GM12878 (cell line): ENCODE measurements at regions of chr4 and their contacts with region 1.

Region 1: GRCh38 chr4:77052352-77052751 is 23.4 kb downstream of the CCNI start:
- DNase-seq: no peak
- ATAC-seq: peak; percentile 87
- H3K4me3 ChIP-seq: no peak overlapping the region
- H3K27ac ChIP-seq: no peak overlapping the region
- H3K4me1 ChIP-seq: no peaks in the 10 kb centered on the region
- H3K27me3 ChIP-seq: no peaks in the 10 kb centered on the region
- CTCF ChIP-seq: peak; percentile 73 to 77 (median 73)
- EP300 ChIP-seq: no peak
- POLR2A ChIP-seq: no peak
- RAD21 ChIP-seq: peak; percentile 72

Region 2: GRCh38 chr4:77065382-77065781 is 13.0 kb after region 1 on chr4:
- CTCF ChIA-PET with region 1: interaction called, 26 read pairs
- POLR2A ChIA-PET with region 1: no interaction called
- RAD21 ChIA-PET with region 1: interaction called, 6 read pairs
- SMC1A ChIA-PET with region 1: interaction called, 8 read pairs
- in situ Hi-C with region 1: no loop called
- intact Hi-C with region 1: no loop called
- DNase-seq: no peak
- ATAC-seq: no peak
- H3K4me3 ChIP-seq: no peak overlapping the region
- H3K27ac ChIP-seq: no peak overlapping the region
- H3K4me1 ChIP-seq: no peaks in the 10 kb centered on the region; the same call in 1 of the 2 replicates
- H3K27me3 ChIP-seq: no peaks in the 10 kb centered on the region
- CTCF ChIP-seq: no peak
- EP300 ChIP-seq: no peak
- POLR2A ChIP-seq: no peak
- RAD21 ChIP-seq: no peak

Region 3: DNA sequence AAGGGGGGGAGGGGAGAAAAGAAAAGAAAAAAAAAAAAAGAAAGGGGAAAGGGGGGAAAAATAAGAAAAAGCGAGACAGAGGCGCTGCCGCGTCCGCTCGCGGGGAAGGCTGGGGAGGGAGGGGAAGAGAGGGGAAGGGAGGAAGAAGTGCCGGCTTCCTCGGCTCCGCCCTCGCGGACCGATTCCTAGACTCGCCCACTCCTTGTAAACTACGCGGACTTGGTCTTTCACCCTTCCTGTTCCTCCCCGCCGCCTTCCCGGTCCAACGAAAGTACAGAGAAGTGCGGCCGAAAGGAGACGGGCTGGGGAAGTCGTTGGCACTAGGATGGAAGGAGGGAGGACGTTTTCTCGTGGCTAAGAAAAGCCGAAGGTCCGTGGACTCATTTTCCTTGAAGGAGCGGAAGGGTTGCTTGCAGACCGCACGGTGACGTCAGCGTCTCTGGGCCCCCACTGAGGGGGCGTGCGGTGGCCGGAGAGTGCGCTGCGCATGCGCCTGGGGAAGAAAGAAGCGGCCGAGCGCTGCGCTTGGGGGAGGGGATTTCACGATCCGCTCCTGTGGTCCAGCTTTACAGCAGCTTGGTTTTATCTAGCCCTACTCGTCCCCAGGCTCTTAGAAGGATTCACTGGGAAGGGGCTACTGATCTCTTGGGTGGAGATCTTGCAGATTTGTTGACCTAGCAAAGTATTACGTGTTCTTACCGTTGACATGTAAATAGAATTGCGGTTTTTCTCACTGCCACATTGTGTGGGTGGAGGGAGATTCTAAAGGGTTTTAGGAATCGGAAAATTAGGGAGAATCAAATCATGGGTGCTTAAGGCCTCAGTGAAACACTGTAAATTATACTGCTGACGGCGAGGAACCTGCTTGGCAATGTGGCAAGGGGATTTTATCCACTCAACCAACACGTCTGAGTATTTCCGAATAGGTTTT is 23.8 kb after region 1 on chr4 and contains the start of gene CCNI:
- CTCF ChIA-PET with region 1: interaction called, 26 read pairs
- POLR2A ChIA-PET with region 1: interaction called, 3 read pairs
- RAD21 ChIA-PET with region 1: interaction called, 7 read pairs
- SMC1A ChIA-PET with region 1: interaction called, 13 read pairs
- in situ Hi-C with region 1: no loop called
- intact Hi-C with region 1: no loop called
- DNase-seq: peak; percentile 92
- ATAC-seq: peak; percentile 77
- H3K4me3 ChIP-seq: peak within 1 kb of the TSS; percentile 97
- H3K27ac ChIP-seq: peak within 1 kb of the TSS; percentile 100
- H3K4me1 ChIP-seq: 0 out of 2 replicates have a peak, but pooled peaks cover 3% of the 10 kb centered on the region
- H3K27me3 ChIP-seq: no peaks in the 10 kb centered on the region
- CTCF ChIP-seq: no peak
- EP300 ChIP-seq: peak; percentile 4 to 78; a peak in 3 of 4 replicates
- POLR2A ChIP-seq: peak; percentile 82
- RAD21 ChIP-seq: no peak
- polyA plus RNA-seq, gene CCNI: 72.4 to 82.4 TPM

Region 4: DNA sequence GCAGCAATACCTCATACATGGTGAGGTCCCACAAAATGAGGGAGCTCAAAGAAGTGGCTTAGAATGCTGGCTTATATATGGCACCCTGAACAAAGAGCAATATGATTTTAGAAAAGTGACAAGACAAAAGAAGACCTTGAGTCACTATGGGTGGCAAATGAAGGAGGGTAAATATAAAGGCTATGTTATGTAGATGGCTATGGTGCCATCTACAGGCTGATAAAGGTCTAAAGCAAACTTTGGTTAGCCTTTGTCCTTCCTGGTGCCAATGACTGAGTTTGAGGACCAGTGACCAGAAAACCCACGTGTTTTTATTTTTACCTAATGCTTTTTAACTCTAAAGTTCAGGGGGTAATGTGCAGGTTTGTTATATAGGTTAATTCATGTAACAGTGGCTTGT is 256.5 kb after region 1 on chr4:
- CTCF ChIA-PET with region 1: no interaction called
- POLR2A ChIA-PET with region 1: no interaction called
- RAD21 ChIA-PET with region 1: no interaction called
- SMC1A ChIA-PET with region 1: interaction called, 4 read pairs
- in situ Hi-C with region 1: no loop called
- intact Hi-C with region 1: loop called (anchors 10 kb)
- DNase-seq: no peak
- ATAC-seq: peak; percentile 82
- H3K4me3 ChIP-seq: no peak overlapping the region
- H3K27ac ChIP-seq: no peak overlapping the region
- H3K4me1 ChIP-seq: no peaks in the 10 kb centered on the region
- H3K27me3 ChIP-seq: no peaks in the 10 kb centered on the region
- CTCF ChIP-seq: peak; percentile 29 to 52 (median 30); a peak in 4 of 6 replicates
- EP300 ChIP-seq: no peak
- POLR2A ChIP-seq: no peak
- RAD21 ChIP-seq: peak; percentile 46

Region 5: DNA sequence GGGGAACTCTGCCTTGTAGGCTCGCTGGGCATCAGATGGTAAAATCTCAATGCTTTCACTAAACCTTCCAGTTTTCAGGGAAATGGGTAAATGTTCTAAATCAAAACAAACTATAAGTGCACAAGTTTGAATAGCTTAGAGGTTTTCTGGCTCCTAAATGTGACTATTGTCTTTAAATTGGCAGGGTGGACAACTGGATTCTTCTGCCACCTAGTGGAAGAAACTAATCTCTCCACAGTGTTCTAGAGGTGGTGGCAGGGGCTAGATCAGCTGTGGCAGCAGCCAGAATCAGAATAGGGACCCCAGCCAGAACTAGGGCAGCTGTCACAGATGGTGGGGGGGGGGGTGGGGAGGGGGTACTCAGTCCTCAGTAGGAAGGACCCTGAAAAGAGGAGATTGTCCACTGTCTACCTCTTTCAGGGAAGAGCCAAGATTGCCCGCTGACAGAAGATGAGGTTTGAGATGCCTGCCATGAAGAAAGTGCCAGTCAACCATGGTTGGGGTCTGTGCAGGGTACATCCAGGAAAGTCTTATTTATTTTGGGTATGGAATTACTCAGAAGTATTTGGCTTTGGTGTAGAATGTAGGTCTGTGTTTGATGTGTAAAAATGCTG is 306.1 kb after region 1 on chr4:
- CTCF ChIA-PET with region 1: interaction called, 3 read pairs
- POLR2A ChIA-PET with region 1: no interaction called
- RAD21 ChIA-PET with region 1: no interaction called
- SMC1A ChIA-PET with region 1: interaction called, 3 read pairs
- in situ Hi-C with region 1: no loop called
- intact Hi-C with region 1: loop called (anchors 5 kb)
- DNase-seq: no peak
- ATAC-seq: peak; percentile 88
- H3K4me3 ChIP-seq: no peak overlapping the region
- H3K27ac ChIP-seq: no peak overlapping the region
- H3K4me1 ChIP-seq: no peaks in the 10 kb centered on the region; the same call in 1 of the 2 replicates
- H3K27me3 ChIP-seq: no peaks in the 10 kb centered on the region; a peak in 1 of 4 replicates
- CTCF ChIP-seq: peak; percentile 60 to 65 (median 60); a peak in 5 of 6 replicates
- EP300 ChIP-seq: no peak
- POLR2A ChIP-seq: no peak
- RAD21 ChIP-seq: peak; percentile 67